ENCODE measurements at regions of chr12 and their contacts with region 1.

Region 1: DNA sequence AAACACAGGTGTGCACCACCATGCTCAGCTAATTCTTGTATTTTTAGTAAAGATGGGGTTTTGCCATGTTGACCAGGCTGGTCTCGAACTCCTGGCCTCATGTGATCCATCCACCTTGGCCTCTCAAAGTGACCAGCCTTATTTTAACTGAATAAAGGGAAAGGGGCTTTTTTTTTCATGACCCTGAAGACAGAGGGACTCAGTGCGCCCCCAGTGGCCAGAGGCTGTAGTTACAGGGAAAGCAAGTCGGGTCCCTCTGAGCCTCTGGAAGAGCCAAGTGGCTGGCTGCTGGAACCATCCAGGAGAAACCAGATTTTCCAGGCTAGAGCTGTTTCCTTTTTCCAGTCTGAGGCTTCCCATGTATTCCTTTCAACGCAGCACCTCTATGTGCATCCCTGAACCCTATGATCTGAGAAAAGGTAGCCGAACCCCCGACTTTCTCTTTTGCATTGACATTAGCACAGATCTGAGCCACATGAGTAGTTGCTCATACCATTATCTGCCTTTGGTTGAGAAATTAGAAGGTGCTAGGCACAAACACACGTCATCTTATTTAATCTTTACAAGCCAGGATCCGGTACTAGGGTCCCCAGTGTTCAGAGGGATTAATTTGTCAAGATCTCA is 342.7 kb downstream of the CACNA1C start:
- H3K4me3 ChIP-seq: no peak overlapping the region
- H3K27ac ChIP-seq: no peak overlapping the region
- H3K4me1 ChIP-seq: no peaks in the 10 kb centered on the region
- CTCF ChIP-seq: 0 out of 2 replicates have a peak, but pooled peaks have one; percentile 8

Region 2: DNA sequence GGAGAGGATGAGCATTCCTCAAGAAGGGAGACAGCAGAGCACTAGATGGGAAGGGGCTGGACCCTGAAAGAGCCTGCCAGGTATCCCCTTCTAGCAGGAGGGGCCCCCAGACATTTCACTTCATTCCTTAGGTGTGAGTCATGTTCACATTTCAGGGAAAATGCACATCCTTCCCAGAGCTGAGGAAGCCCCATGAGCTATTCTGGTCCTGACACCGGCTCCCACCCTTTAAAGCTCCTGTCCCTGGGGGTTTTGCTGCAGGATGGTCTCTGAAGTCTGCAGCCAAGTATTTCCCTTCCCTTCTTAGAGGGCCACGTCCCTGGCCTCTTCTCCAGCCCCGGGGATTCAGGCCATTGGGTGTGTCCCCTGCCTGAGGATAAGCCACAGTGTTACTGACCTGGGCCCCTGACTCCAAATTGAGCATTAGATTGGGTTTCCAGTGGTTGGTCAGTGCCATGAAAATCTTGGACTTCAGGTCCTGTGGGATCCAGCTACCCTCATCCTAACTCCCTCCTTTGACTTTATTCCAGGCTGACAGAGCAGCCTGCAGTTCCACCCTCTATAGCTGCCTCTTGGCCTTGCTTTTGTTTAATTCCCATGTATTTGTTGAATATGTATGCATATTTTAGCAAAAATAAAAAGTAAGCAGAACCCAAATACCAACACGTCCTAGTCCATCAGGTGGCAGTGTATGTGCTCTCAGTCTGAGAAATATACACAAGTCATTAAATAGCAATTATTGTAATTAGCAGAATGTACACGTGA is 75.5 kb before region 1 on chr12:
- CTCF ChIA-PET with region 1: no interaction called
- POLR2A ChIA-PET with region 1: no interaction called
- H3K4me3 ChIP-seq: no peak overlapping the region
- H3K27ac ChIP-seq: no peak overlapping the region
- H3K4me1 ChIP-seq: no peaks in the 10 kb centered on the region
- CTCF ChIP-seq: no peak

Region 3: DNA sequence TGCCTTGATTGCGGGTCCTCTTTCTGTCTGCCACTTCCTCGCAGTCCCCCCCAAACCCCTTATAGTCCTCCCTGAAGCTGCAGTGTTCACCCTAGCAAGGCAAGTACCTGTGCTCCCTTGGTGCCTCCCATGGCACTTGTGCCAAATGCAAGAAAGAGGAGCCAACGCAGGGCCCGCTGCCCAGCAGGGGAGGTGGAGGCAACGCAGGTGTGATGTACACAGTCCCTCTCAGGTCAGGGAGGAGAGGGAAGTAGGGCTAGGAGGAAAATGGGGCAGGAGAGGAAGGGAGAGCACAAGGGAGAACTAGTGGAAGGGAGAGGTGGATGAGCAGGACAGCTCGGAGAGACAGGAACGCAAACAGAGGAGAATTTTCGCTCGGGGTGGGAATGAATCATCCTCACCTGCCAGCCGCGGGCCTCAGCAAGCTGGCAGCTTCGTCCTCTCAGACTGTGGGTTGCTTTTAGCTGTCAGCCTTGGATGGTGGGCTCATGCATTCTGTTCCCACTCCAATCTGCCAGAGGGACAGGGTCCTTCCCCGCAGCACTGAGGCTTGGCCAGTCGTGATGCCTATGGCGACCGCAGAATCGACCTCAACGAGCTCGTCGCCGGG is 14.3 kb after region 1 on chr12:
- CTCF ChIA-PET with region 1: interaction called, 11 read pairs
- POLR2A ChIA-PET with region 1: interaction called, 4 read pairs
- H3K4me3 ChIP-seq: no peak overlapping the region
- H3K27ac ChIP-seq: no peak overlapping the region
- H3K4me1 ChIP-seq: no peaks in the 10 kb centered on the region
- CTCF ChIP-seq: no peak

Measured in HEK293 (cell line).